GM23248 (cell line): ENCODE measurements at regions of chr14 and their contacts with region 1.

Region 1: GRCh38 chr14:61296719-61297502 is 15.8 kb upstream of the TMEM30B start:
- DNase-seq: peak; percentile 67
- H3K4me3 ChIP-seq: no peak overlapping the region
- H3K27ac ChIP-seq: no peak overlapping the region
- H3K4me1 ChIP-seq: no peaks in the 10 kb centered on the region
- H3K27me3 ChIP-seq: 0 out of 2 replicates have a peak, but pooled peaks cover 2% of the 10 kb centered on the region

Region 2: GRCh38 chr14:60331201-60332045 is 965.5 kb before region 1 on chr14:
- in situ Hi-C with region 1: loop called (anchors 25 kb)
- DNase-seq: peak; percentile 48
- H3K4me3 ChIP-seq: peak overlapping the region; percentile 63
- H3K27ac ChIP-seq: no peak overlapping the region
- H3K4me1 ChIP-seq: 0 out of 2 replicates have a peak, but pooled peaks cover 2% of the 10 kb centered on the region
- H3K27me3 ChIP-seq: peaks cover 25% of the 10 kb centered on the region

Region 3: GRCh38 chr14:60508707-60509437 is 788.0 kb before region 1 on chr14 and contains the start of gene SIX6:
- in situ Hi-C with region 1: no loop called
- DNase-seq: peak; percentile 39
- H3K4me3 ChIP-seq: no peak within 1 kb of the TSS
- H3K27ac ChIP-seq: no peak within 1 kb of the TSS
- H3K4me1 ChIP-seq: no peaks in the 10 kb centered on the region
- H3K27me3 ChIP-seq: peaks cover 99% of the 10 kb centered on the region
- total RNA-seq, gene SIX6: not detected in 2 replicates